Transverse colon (tissue), 4 donors: ENCODE measurements at regions of chr14 and their contacts with region 1.

Region 1: GRCh38 chr14:88492272-88493089 is 62.3 kb downstream of the PTPN21 start:
- DNase-seq: peak; percentile 74
- H3K4me3 ChIP-seq: no peak overlapping the region
- H3K27ac ChIP-seq: peak overlapping the region; percentile 27 to 61 (median 46)
- H3K4me1 ChIP-seq: peaks cover 0 to 18% (median 4%) of the 10 kb centered on the region in 4 donors
- H3K27me3 ChIP-seq: no peaks in the 10 kb centered on the region
- CTCF ChIP-seq: peak; percentile 92 to 97 (median 93)
- EP300 ChIP-seq: no peak
- POLR2A ChIP-seq: no peak

Region 2: GRCh38 chr14:88562831-88563686 is 70.6 kb after region 1 on chr14 and contains the start of gene ZC3H14:
- in situ Hi-C with region 1: loop called in 3 of 4 experiments (anchors 5 to 10 kb)
- intact Hi-C with region 1: no loop called
- DNase-seq: peak; percentile 89
- H3K4me3 ChIP-seq: peak within 1 kb of the TSS; percentile 59 to 94 (median 92)
- H3K27ac ChIP-seq: peak within 1 kb of the TSS; percentile 95 to 98 (median 97)
- H3K4me1 ChIP-seq: peaks cover 6 to 25% (median 14%) of the 10 kb centered on the region in 4 donors
- H3K27me3 ChIP-seq: no peaks in the 10 kb centered on the region
- CTCF ChIP-seq: no peak
- EP300 ChIP-seq: no peak
- POLR2A ChIP-seq: peak; percentile 87
- total RNA-seq, gene ZC3H14: 29.9 to 103 (median 81.0) TPM

Region 3: DNA sequence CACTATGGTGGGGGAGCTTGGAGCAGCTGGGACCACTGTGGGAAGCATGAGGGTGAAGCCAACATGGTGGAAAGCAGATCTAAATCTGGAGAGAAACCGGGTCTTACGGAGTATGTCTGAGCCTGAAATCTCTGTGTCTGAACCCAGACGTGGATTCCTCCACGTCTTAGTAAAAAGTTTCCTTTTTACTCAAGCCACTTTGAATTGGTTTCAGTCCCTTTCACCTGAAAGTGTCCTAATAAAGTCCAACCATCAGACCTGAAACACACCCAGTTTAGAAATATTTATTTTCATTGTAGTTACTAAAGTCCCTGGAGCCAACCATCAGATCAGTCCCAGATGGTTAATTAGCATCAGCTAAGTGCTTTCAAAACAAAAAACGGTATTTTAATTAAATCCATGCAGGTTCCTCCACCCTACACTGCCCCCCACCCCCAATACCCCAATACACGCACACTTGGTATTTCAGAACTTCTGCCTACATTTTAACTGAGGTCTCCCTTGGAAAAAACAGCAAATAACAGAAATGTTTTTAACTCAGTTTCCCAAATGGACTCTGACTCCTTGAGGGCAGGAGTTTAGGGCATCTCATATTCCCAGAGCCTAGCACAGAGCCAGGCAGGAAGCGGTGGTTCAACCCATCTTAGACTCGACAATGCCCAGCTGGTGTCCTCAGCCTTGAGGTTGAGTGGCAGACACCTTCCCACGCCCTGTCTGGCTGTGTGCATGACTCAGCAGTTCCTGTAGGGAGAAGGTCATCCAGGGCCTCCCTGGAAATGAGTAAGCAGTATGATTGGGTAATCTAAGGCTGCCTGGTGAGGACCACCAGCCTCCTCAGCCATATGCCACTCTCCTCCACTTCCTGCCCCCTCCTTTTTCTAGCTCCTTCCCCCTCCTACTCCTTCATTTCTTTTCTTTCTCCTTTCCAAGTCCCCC is 507.8 kb after region 1 on chr14:
- in situ Hi-C with region 1: loop called in 1 of 4 experiments (anchors 25 kb)
- intact Hi-C with region 1: no loop called
- DNase-seq: peak; percentile 68
- H3K4me3 ChIP-seq: no peak overlapping the region
- H3K27ac ChIP-seq: no peak overlapping the region
- H3K4me1 ChIP-seq: peaks cover 0 to 4% (median 0%) of the 10 kb centered on the region in 4 donors
- H3K27me3 ChIP-seq: no peaks in the 10 kb centered on the region
- CTCF ChIP-seq: no peak
- EP300 ChIP-seq: no peak
- POLR2A ChIP-seq: no peak